ENCODE measurements at regions of chr12 and their contacts with region 1.

Region 1: DNA sequence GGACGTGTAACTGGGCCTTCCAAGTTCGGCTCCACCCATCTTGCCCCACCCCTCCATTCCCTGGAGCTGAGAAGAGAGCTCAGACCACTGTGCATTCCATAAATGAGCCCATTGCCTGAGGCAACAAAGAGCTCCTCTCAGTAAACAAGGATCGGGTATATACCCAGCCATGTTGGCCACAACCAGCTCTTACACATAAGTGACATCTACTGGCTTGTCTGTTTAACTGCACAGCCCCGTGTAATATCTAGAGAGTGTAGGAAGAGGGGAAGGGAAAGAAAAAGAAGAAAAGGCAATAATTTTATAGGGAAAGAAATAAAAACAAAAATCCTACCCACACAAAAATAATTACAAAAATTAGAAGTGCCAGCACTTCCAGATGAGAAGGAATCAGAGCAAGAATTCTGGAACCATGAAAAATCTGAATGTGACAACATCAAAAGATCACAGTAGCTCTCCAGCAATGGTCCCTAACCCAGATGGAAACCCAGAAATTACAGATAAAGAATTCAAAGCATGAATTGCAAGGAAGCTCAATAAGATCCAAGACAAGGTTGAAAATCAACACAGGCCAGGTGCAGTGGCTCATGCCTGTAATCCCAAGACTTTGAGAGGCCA is 308.1 kb downstream of the RPAP3 start:
- DNase-seq: peak; percentile 60 to 66 (median 65)
- H3K4me3 ChIP-seq: peak overlapping the region in 1 of 2 donors; percentile 14
- H3K4me3 Mint-ChIP-seq: peak overlapping the region in 7 of 8 donors; percentile 58 to 79 (median 69)
- H3K27ac ChIP-seq: peak overlapping the region; percentile 35
- H3K27ac Mint-ChIP-seq: peak overlapping the region; percentile 75 to 94 (median 90)
- H3K4me1 ChIP-seq: peaks cover 52% of the 10 kb centered on the region
- H3K4me1 Mint-ChIP-seq: peaks cover 39 to 50% (median 44%) of the 10 kb centered on the region in 4 donors
- H3K27me3 ChIP-seq: no peaks in the 10 kb centered on the region
- H3K27me3 Mint-ChIP-seq: no peaks in the 10 kb centered on the region

Region 2: DNA sequence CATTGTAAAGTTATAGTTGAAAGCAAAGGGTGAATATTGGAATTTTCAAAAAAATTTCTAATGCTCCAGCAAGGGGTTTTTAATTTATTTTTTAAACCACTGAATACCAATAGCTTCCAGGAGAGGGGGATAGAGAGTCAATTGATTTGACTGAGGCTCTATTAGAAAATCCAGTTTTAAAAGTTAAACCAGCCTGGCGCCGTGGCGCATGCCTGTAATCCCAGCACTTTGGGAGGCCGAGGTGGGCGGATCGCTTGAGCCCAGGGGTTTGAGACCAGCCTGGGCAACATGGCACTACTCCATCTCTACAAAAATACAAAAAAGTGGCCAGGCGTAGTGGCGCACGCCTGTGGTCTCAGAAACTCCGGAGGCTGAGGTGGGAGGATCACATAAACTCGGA is 722.0 kb before region 1 on chr12:
- CTCF ChIA-PET with region 1: no interaction called
- POLR2A ChIA-PET with region 1: no interaction called
- intact Hi-C with region 1: loop called (anchors 5 kb)
- DNase-seq: peak in 4 of 5 donors; percentile 15 to 36 (median 22)
- H3K4me3 ChIP-seq: no peak overlapping the region
- H3K4me3 Mint-ChIP-seq: no peak overlapping the region
- H3K27ac ChIP-seq: no peak overlapping the region
- H3K27ac Mint-ChIP-seq: no peak overlapping the region
- H3K4me1 ChIP-seq: no peaks in the 10 kb centered on the region
- H3K4me1 Mint-ChIP-seq: no peaks in the 10 kb centered on the region
- H3K27me3 ChIP-seq: no peaks in the 10 kb centered on the region
- H3K27me3 Mint-ChIP-seq: peaks cover 2 to 3% of the 10 kb centered on the region in 2 donors

Region 3: GRCh38 chr12:47071241-47071852 is 326.4 kb before region 1 on chr12:
- CTCF ChIA-PET with region 1: interaction called, 71 read pairs
- POLR2A ChIA-PET with region 1: interaction called, 12 read pairs
- intact Hi-C with region 1: no loop called
- DNase-seq: peak in 4 of 5 donors; percentile 15 to 32 (median 26)
- H3K4me3 ChIP-seq: no peak overlapping the region
- H3K4me3 Mint-ChIP-seq: no peak overlapping the region
- H3K27ac ChIP-seq: no peak overlapping the region
- H3K27ac Mint-ChIP-seq: no peak overlapping the region
- H3K4me1 ChIP-seq: no peaks in the 10 kb centered on the region
- H3K4me1 Mint-ChIP-seq: peaks cover 0 to 7% (median 3%) of the 10 kb centered on the region in 4 donors
- H3K27me3 ChIP-seq: no peaks in the 10 kb centered on the region
- H3K27me3 Mint-ChIP-seq: no peaks in the 10 kb centered on the region

Region 4: DNA sequence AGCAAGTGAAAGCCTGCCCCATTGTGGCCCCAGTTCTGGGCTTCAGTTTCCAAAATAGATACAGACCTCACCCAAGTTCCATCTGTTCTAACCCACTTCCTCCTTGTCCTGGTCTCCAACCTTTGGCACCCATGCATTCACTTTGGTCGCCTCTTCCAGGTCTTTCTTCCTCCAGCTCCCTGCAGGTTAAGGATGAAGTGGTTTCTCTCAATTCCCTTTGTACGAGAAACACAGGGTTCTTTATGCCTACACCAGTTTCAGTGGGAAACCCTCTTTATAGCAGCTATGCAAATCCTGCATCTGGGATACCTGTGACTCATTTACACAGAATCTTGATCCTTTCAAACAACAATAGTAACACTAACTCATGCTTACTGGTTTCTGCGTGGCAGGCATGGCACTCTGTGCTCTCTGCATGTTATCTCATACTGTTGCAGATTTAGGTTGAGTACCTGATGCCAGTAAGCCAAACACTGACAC is 207.5 kb before region 1 on chr12:
- CTCF ChIA-PET with region 1: interaction called, 36 read pairs
- POLR2A ChIA-PET with region 1: interaction called, 13 read pairs
- intact Hi-C with region 1: loop called (anchors 5 kb)
- DNase-seq: no peak
- H3K4me3 ChIP-seq: no peak overlapping the region
- H3K4me3 Mint-ChIP-seq: peak overlapping the region in 7 of 8 donors; percentile 8 to 93 (median 69)
- H3K27ac ChIP-seq: peak overlapping the region; percentile 42
- H3K27ac Mint-ChIP-seq: peak overlapping the region; percentile 62 to 95 (median 93)
- H3K4me1 ChIP-seq: peaks cover 80% of the 10 kb centered on the region
- H3K4me1 Mint-ChIP-seq: peaks cover 67 to 90% (median 78%) of the 10 kb centered on the region in 4 donors
- H3K27me3 ChIP-seq: no peaks in the 10 kb centered on the region
- H3K27me3 Mint-ChIP-seq: no peaks in the 10 kb centered on the region

Region 5: GRCh38 chr12:47276621-47277309 is 121.0 kb before region 1 on chr12:
- CTCF ChIA-PET with region 1: interaction called, 12 read pairs
- POLR2A ChIA-PET with region 1: interaction called, 11 read pairs
- intact Hi-C with region 1: no loop called
- DNase-seq: peak; percentile 75 to 85 (median 81)
- H3K4me3 ChIP-seq: peak overlapping the region in 1 of 2 donors; percentile 19
- H3K4me3 Mint-ChIP-seq: peak overlapping the region; percentile 51 to 87 (median 74)
- H3K27ac ChIP-seq: peak overlapping the region; percentile 55
- H3K27ac Mint-ChIP-seq: peak overlapping the region; percentile 85 to 98 (median 92)
- H3K4me1 ChIP-seq: peaks cover 44% of the 10 kb centered on the region
- H3K4me1 Mint-ChIP-seq: peaks cover 32 to 59% (median 53%) of the 10 kb centered on the region in 4 donors
- H3K27me3 ChIP-seq: no peaks in the 10 kb centered on the region
- H3K27me3 Mint-ChIP-seq: no peaks in the 10 kb centered on the region

Region 6: DNA sequence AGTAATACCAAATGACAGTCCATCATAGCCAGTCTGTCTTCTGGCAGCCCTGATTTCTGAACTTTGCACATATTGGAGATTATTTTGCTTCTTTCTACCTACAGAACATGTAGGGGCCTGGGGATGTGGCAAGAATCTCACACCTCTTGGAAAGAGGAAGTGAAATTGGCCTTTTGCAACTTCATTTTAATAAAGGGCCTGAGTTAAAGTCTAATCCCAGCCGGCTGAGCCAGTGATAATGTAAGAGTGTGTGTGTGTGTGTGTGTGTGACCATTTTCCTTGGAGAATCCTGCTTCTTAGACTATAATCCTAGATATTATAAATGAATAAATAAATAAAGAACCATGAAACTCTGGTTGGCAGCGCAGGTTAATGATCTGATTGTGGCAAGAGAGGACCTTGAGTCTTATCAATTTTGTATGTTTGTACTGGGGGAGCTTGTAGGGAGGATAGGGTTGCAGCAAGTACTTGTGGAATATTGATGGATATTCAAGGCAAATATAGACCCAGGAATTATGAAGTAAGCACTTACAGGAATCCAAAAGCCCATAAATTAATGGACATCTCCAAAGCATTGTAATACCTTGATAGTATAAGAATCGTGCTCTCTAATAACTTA is 84.9 kb before region 1 on chr12:
- CTCF ChIA-PET with region 1: interaction called, 51 read pairs
- POLR2A ChIA-PET with region 1: interaction called, 53 read pairs
- intact Hi-C with region 1: no loop called
- DNase-seq: no peak
- H3K4me3 ChIP-seq: no peak overlapping the region
- H3K4me3 Mint-ChIP-seq: no peak overlapping the region
- H3K27ac ChIP-seq: no peak overlapping the region
- H3K27ac Mint-ChIP-seq: no peak overlapping the region
- H3K4me1 ChIP-seq: peaks cover 21% of the 10 kb centered on the region
- H3K4me1 Mint-ChIP-seq: peaks cover 14 to 45% (median 24%) of the 10 kb centered on the region in 4 donors
- H3K27me3 ChIP-seq: no peaks in the 10 kb centered on the region
- H3K27me3 Mint-ChIP-seq: no peaks in the 10 kb centered on the region

Region 7: DNA sequence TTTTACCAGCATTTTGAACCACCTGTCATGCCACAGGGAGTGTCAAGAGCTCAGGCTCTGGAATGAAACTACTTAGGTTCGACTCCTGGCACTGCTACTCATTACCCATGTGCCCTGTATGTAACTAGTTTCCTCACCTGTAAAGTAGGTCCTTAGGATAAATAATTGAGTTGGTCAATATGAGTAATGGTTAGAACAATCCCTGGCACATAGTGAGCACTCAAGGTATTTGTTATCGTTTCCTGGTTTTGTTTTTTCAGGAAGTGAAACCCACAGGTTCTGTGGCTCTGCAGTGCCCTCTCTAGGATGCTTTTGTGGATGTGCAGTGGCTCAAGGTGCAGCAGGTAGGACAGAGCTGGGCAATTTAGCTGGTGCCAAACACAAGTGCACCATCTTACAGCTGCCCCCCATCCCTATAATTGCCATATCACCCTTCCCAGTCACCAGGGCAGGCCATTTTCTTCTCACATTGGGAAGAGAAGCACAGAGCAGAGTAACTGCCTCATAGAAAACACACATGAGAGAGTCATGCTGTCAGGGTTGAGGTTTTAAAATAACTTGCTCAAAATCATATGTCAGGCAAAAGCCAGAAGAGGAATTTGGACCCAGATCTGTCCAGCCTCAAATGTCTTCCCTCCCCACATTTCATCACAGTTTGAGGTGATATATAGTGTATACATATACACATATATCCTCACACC is 10.5 kb after region 1 on chr12:
- CTCF ChIA-PET with region 1: interaction called, 23 read pairs
- POLR2A ChIA-PET with region 1: interaction called, 4 read pairs
- intact Hi-C with region 1: no loop called
- DNase-seq: peak; percentile 39 to 48 (median 44)
- H3K4me3 ChIP-seq: peak overlapping the region in 1 of 2 donors; percentile 24
- H3K4me3 Mint-ChIP-seq: peak overlapping the region in 5 of 8 donors; percentile 12 to 48 (median 39)
- H3K27ac ChIP-seq: no peak overlapping the region
- H3K27ac Mint-ChIP-seq: peak overlapping the region in 4 of 7 donors; percentile 1 to 58 (median 33)
- H3K4me1 ChIP-seq: peaks cover 44% of the 10 kb centered on the region
- H3K4me1 Mint-ChIP-seq: peaks cover 41 to 74% (median 50%) of the 10 kb centered on the region in 4 donors
- H3K27me3 ChIP-seq: no peaks in the 10 kb centered on the region
- H3K27me3 Mint-ChIP-seq: no peaks in the 10 kb centered on the region

Measured in CD4-positive, alpha-beta memory T cell (primary cell).